ENCODE measurements at regions of chr18 and their contacts with region 1.

Region 1: DNA sequence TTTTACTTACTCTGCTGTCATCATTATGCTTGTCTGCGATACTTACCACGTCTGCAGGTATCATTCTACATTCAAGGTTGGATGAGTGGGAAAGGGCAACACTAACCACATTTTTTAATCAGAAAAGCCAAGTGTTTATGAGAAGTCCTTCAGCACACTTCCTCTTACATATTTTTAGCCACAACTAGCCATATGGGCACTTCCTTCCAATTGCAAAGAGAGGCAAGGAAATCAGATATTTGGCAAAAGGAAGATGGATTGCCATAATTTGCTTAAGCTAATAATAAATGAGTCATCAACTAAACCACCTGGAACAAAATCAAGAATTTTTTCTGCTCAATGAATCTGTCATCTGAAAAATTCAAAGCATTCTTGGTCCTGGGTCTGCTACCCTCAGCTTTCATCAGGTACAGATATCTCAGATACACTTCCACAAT is 16.7 kb upstream of the MRO start:
- DNase-seq: no peak
- CTCF ChIP-seq: no peak

Region 2: GRCh38 chr18:51029694-51030536 is 193.4 kb after region 1 on chr18 and contains the start of gene SMAD4:
- in situ Hi-C with region 1: loop called (anchors 25 kb)
- DNase-seq: peak; percentile 96
- CTCF ChIP-seq: no peak